Aorta (tissue), 5 donors: ENCODE measurements at regions of chr15 and their contacts with region 1.

Region 1: GRCh38 chr15:68304589-68305337 is 27.2 kb downstream of the FEM1B start:
- DNase-seq: no peak
- ATAC-seq: no peak
- H3K4me3 ChIP-seq: no peak overlapping the region
- H3K27ac ChIP-seq: peak overlapping the region in 1 of 2 donors; percentile 20
- H3K4me1 ChIP-seq: no peaks in the 10 kb centered on the region
- H3K27me3 ChIP-seq: no peaks in the 10 kb centered on the region

Region 2: GRCh38 chr15:68352401-68353062 is 47.8 kb after region 1 on chr15:
- intact Hi-C with region 1: loop called in 1 of 2 experiments (anchors 5 kb)
- DNase-seq: peak; percentile 89 to 91
- ATAC-seq: peak; percentile 83
- H3K4me3 ChIP-seq: no peak overlapping the region
- H3K27ac ChIP-seq: peak overlapping the region; percentile 95 to 99
- H3K4me1 ChIP-seq: peaks cover 2 to 6% of the 10 kb centered on the region in 2 donors
- H3K27me3 ChIP-seq: no peaks in the 10 kb centered on the region

Region 3: DNA sequence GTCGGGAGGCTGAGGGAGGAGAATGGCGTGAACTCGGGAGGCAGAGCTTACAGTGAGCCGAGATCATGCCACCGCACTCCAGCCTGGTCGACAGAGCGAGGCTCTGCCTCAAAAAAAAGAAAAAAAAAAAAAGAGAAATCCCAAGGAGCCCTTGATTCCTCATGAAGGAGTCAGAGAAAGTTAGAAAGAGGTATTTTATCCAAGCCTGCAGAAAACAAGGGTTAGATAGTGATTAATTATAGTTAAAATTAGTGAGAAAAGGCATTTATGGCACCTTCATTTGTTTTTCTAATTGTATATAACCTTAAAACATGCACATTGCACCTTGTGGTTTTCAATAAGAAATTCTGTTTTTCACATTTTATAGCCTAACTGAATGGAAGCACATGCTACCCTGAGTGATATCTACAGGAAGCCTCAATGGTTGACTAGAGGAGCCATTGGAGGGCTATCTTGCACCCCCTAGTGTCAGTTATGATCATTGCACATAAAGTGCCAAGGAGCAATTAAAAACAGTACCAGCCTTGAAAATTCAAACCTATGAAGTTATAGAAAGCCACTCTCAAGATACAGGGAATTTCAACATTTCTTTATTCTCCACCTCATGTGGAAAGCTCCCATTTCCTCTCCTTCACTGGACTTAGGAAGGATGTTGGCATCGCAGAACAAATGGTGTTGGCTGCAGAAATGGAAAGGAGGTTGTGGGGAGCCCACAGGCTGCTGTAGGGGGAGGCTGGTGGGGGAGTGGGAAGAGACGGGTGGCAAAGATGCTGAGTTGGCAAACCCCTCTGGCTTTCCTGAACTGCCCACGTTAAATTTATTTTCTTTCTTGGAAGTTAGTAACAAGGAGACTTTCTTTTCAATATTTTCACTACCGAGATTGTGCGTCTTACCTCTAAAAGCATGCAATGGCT is 78.7 kb after region 1 on chr15:
- intact Hi-C with region 1: loop called in 1 of 2 experiments (anchors 5 kb)
- DNase-seq: no peak
- ATAC-seq: peak; percentile 65
- H3K4me3 ChIP-seq: no peak overlapping the region
- H3K27ac ChIP-seq: peak overlapping the region; percentile 6 to 60
- H3K4me1 ChIP-seq: peaks cover 0 to 3% of the 10 kb centered on the region in 2 donors
- H3K27me3 ChIP-seq: no peaks in the 10 kb centered on the region

Region 4: DNA sequence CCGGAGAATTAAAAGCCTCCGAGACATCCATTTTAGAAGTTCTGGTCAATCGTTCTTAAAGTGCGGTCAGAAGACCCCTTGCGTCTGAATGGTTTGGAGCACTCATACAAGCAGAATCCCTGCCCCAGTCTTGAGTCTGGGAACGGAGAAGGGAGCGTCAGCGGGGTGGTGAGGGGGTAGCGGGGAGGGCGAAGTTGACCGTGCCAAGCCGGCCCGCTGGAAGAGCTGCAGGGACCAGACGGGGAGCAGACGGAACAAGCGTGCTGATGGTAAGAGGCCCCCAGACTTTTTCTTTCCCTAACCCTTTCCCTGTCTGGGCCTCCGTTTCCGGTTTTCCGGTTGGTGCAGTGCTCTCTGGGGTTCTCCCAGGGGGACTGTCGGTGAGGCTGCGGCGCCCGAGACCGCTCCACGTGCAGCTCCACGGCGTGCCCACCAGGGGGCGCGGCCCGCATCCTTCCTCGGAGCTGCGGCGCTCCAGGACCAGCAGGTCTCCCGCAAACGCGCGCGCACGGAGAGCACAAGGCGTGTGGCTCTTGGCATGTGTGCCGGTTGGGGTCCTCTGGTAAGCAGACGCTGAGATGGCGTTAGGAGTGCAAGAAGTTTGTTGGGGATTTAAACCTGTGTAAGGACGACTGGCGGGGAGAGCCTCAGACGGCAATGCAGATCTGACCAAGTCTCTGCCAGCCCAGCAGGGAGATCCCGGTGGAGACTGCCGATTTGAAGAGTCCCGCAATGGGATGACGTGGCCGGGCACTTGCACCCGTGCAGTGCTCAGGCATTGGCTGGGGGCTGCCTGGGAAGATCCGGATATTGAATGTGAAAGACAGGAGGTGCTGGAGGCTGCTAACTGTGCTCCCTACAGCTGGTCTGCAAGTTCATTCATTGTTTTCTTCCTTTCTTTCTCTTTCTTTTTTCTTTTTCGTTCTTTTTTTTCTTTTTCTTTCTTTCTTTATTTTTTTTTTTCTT is 254.9 kb after region 1 on chr15:
- intact Hi-C with region 1: loop called in 1 of 2 experiments (anchors 5 kb)
- DNase-seq: peak; percentile 83 to 95
- ATAC-seq: peak; percentile 95
- H3K4me3 ChIP-seq: peak overlapping the region; percentile 15 to 27
- H3K27ac ChIP-seq: no peak overlapping the region
- H3K4me1 ChIP-seq: no peaks in the 10 kb centered on the region
- H3K27me3 ChIP-seq: no peaks in the 10 kb centered on the region